PC-3 (cell line): ENCODE measurements at regions of chr2 and their contacts with region 1.

Region 1: DNA sequence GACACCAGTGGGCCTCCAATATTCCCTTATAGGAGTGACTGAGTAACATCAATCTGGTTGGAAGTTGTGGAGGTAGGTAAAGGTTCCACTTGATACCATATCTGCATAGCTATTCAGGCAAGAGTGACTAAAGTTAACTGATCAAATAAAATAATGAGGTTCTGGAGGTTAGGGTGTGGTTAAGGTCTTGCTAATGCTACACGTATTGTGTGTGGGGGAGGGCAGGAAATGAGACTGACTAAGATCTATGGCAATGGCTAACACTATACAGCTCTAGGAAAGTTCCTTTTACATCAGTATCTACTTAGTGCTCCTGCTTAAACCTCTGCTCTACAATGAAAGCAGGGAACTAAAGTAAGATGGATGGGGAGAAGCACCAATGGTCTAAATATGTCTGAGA is 149.1 kb upstream of the MGAT5 start:
- DNase-seq: peak; percentile 71
- ATAC-seq: peak; percentile 84
- H3K4me3 ChIP-seq: no peak overlapping the region
- H3K27ac ChIP-seq: no peak overlapping the region
- H3K4me1 ChIP-seq: peaks cover 8% of the 10 kb centered on the region
- H3K27me3 ChIP-seq: no peaks in the 10 kb centered on the region
- CTCF ChIP-seq: no peak

Region 2: GRCh38 chr2:134083548-134083947 is 21.2 kb before region 1 on chr2:
- CTCF ChIA-PET with region 1: interaction called, 16 read pairs
- POLR2A ChIA-PET with region 1: no interaction called
- intact Hi-C with region 1: no loop called
- DNase-seq: peak; percentile 46
- ATAC-seq: no peak
- H3K4me3 ChIP-seq: no peak overlapping the region
- H3K27ac ChIP-seq: no peak overlapping the region
- H3K4me1 ChIP-seq: peaks cover 7% of the 10 kb centered on the region
- H3K27me3 ChIP-seq: no peaks in the 10 kb centered on the region
- CTCF ChIP-seq: no peak